Tibial artery (tissue), 4 donors: ENCODE measurements at regions of chr11 and their contacts with region 1.

Region 1: DNA sequence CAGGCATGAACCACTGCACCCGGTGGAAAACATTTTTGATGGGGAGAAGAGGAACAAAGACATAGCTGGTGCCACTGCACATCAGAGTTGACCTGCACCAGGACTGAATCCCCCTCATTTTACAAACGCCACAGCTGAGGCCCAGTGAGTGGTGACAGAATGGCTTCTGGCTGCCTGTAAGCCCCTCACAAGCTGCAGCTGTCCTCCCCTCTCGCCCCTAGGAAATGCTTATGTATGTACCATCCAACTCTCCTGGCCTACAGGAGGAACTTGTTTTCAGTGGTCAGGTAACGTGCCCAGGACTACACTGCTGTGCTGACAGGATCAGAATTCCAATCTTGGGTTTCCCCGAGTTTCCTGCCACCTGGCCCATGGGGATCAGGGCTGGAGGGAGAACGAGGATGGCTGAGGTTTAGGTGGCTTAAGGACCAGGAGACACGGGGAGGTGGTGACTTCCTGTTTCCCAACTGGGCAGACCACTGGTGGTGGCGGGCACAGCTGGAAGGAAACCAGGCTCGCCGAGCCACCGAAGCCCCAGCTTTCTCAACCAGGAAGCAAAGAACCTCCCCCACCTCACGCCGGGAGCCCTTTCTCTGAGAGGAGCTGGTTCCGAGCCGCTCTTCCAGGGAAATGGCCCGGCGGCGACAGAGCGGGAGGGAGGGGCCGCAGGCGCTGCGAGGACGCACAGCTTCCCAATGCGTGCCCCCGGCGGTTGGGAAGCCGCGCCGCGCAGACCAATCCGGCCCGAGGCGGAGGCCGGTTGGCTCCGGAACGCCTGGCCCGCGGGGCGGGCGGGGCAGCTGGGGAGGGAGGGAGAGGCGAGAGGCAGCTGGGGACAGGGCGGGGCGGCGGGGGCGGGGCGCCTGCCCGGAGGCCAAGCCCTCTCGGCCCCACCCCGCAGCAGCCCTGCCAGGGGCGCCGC is 1.0 kb upstream of the LRFN4 start:
- DNase-seq: peak; percentile 93 to 98
- H3K4me3 ChIP-seq: peak overlapping the region; percentile 70 to 73
- H3K27ac ChIP-seq: peak overlapping the region; percentile 86 to 99
- H3K4me1 ChIP-seq: peaks cover 4 to 14% (median 6%) of the 10 kb centered on the region in 4 donors
- H3K27me3 ChIP-seq: no peaks in the 10 kb centered on the region
- CTCF ChIP-seq: peak in 1 of 2 experiments; percentile 16

Region 2: DNA sequence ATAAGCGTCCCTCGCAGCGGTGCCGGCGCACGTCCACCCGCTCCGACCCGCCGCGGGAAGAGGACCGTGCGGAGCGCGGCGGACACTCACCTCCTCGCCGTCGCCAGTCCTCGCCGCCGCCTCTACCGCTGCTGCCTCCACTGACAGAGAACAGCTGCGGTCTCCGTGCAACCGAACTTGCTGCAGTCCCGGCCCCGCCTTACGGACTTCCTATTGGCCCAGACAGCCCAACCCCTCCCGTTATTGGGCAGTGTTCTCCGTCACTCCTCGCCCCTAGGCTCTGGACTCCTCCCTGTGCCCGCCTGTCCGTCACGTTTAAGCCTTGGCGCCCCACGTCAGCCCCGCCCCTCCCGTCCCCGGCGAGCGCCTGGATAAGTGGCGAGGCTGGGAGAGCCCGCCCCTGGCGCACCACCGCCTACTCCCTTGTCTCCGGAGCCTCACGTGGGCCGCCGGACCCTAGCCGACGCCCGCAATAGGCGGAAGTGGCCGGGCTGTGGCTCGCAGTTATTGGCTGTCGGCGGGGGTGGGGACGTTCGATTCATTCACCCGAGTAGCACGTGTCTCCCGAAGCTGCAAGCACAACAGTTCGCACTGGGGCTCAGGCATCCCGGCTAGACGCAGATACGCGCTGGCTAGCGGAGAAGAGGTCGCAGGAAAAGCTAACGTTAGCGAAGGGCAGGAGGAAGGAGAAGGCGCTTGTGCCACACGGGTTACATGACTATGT is 102.6 kb after region 1 on chr11 and contains the start of gene PC:
- intact Hi-C with region 1: loop called (anchors 10 kb)
- DNase-seq: peak; percentile 100
- H3K4me3 ChIP-seq: peak within 1 kb of the TSS; percentile 70 to 76
- H3K27ac ChIP-seq: peak within 1 kb of the TSS; percentile 74 to 81
- H3K4me1 ChIP-seq: peaks cover 0 to 27% (median 13%) of the 10 kb centered on the region in 4 donors
- H3K27me3 ChIP-seq: no peaks in the 10 kb centered on the region
- CTCF ChIP-seq: no peak